Mammary epithelial cell (primary cell): ENCODE measurements at regions of chr6 and their contacts with region 1.

Region 1: GRCh38 chr6:43593938-43594337 is 18.0 kb downstream of the POLH start:
- DNase-seq: no peak
- H3K4me3 ChIP-seq: no peak overlapping the region
- H3K27ac ChIP-seq: no peak overlapping the region
- H3K4me1 ChIP-seq: no peaks in the 10 kb centered on the region
- H3K27me3 ChIP-seq: no peaks in the 10 kb centered on the region
- CTCF ChIP-seq: no peak

Region 2: DNA sequence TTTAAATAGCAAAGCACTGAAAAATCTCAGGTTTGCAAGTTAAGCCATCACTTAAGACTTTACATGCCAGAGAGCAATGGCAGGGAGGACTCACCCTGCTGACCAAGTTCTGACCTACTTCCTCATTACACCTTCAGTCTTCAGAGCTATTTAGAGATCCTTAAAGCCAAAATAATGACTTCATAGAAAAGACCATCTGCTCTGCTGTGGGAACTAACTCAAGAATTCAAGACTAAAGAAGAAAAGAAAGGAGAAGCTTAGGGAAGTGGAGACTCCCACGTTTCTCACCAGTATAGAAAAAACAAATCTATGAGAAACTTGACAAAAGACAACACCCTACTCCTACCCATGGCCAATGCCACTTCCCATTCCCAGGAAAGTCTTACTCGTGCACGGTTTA is 46.7 kb before region 1 on chr6:
- CTCF ChIA-PET with region 1: interaction called, 25 read pairs
- dilution Hi-C with region 1: no loop called
- in situ Hi-C with region 1: no loop called
- intact Hi-C with region 1: no loop called
- DNase-seq: no peak
- H3K4me3 ChIP-seq: no peak overlapping the region
- H3K27ac ChIP-seq: no peak overlapping the region
- H3K4me1 ChIP-seq: no peaks in the 10 kb centered on the region
- H3K27me3 ChIP-seq: no peaks in the 10 kb centered on the region
- CTCF ChIP-seq: no peak